Common myeloid progenitor, CD34-positive (primary cell): ENCODE measurements at regions of chr15 and their contacts with region 1.

Region 1: DNA sequence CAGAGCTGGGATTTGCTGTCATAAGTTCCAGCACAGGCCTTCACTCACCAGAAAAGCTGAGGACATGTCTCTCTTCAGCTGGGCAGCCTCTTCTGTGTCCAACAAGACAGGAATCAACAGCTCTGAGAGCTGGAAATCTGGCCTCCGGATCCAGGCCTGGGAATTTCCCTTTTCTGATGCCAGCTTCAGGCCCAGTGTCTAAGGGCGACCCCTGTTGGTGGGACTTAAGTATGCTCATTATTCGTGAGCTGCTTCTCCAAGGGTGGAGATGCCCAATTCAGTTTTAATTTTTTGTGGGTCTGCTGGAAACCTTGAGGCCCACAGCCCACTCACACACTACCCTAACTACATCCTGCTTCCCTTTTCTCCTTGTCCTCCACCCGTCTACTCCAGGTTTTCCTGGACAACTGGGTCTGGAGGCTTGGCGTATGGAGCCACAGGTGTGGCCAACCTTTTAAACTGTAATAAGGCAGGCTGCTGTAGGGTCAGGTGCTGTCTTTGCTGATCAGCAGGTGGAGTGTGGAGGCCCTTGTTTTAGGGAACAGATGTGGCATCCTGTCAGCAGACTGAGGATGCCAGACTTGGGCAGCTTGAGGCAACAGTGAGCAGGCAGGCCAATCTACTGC is 2.6 kb upstream of the CEMIP start:
- DNase-seq: peak; percentile 75 to 88 (median 81)
- H3K4me3 ChIP-seq: no peak overlapping the region
- H3K27ac ChIP-seq: no peak overlapping the region
- H3K4me1 ChIP-seq: peaks cover 3 to 49% (median 36%) of the 10 kb centered on the region in 4 experiments
- H3K27me3 ChIP-seq: peaks cover 0 to 38% (median 23%) of the 10 kb centered on the region in 5 experiments

Region 2: DNA sequence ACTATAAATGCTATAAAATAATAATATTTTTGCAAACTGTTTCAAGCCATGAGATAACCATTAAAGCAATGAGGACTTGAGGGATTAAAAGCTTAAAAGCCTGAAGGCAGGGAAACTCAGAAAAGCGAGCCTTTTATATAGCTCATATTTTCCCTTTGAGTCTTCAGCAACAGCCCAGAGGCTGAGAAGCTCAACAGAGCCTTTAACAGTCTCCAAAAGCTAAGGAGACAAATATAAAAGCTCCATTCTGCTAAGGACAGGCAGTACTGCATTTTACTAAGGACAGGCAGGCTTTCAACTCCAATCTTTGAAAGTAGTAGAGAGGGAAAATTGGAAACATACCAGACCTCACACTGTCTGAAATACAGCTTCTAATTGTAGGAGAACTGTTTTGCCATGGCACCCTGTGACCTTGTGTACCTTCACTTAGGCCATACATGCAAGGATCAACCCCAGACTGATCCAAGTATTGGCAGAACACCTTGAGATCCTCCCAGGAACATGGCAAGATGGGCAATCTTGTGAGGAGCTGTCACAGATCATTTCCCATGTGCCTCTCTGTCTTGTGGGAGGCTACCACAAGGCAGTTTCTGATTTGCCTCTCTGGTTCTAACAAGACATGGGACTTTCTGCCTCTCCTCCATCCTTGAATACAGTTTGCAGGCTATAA is 425.5 kb before region 1 on chr15:
- CTCF ChIA-PET with region 1: no interaction called
- POLR2A ChIA-PET with region 1: no interaction called
- DNase-seq: no peak
- H3K4me3 ChIP-seq: no peak overlapping the region
- H3K27ac ChIP-seq: no peak overlapping the region
- H3K4me1 ChIP-seq: peaks cover 0 to under 1% (median 0%) of the 10 kb centered on the region in 4 experiments
- H3K27me3 ChIP-seq: peaks cover 0 to 3% (median 2%) of the 10 kb centered on the region in 5 experiments

Region 3: DNA sequence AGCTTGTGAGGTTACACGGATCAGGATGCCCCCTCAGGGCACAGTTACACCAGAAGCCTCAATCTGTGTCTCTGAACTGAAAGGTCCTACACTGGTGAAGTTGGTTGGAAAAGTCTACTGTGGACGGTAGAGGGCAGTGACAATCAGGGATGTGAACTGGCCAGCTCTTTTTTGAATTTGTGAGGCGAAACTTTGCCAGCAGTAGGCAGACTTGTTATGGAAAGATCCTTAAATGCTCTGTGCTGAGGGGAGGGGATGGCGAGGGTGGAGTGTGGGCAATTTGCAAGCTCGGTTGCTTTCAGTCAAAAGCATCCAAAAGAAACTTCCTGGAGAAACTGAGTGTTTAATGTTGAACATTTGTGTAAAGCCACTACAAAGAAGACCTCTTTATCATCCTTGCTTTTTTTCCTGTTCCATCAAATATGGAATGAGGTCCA is 208.8 kb before region 1 on chr15:
- CTCF ChIA-PET with region 1: interaction called, 57 read pairs
- POLR2A ChIA-PET with region 1: interaction called, 4 read pairs
- DNase-seq: peak; percentile 78 to 85 (median 80)
- H3K4me3 ChIP-seq: no peak overlapping the region
- H3K27ac ChIP-seq: no peak overlapping the region
- H3K4me1 ChIP-seq: peaks cover 0 to 7% (median 6%) of the 10 kb centered on the region in 4 experiments
- H3K27me3 ChIP-seq: peaks cover 0 to 2% (median 0%) of the 10 kb centered on the region in 5 experiments

Region 4: DNA sequence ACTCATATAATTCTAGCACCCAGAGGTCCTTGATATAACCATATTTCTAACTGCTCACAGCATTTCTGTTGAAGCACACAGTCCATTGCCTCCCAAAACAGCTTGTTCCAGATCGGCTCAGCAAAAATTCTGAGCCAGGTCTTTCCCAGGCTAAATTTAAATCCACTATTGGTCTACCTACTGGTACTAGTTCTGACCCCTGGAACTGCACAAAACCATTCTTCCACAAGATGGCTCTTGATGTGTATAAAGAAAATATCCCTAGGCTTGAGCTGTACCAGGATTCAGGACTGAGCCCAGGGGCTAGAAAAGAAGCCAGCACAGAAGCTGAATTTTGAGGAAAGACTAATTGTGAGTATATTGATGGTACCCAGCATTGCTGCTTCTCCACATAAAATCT is 156.9 kb before region 1 on chr15:
- CTCF ChIA-PET with region 1: interaction called, 29 read pairs
- POLR2A ChIA-PET with region 1: no interaction called
- DNase-seq: peak; percentile 31 to 61 (median 44)
- H3K4me3 ChIP-seq: no peak overlapping the region
- H3K27ac ChIP-seq: no peak overlapping the region
- H3K4me1 ChIP-seq: no peaks in the 10 kb centered on the region
- H3K27me3 ChIP-seq: peaks cover 0 to 17% (median 4%) of the 10 kb centered on the region in 5 experiments

Region 5: GRCh38 chr15:80669663-80670273 is 106.8 kb before region 1 on chr15:
- CTCF ChIA-PET with region 1: interaction called, 12 read pairs
- POLR2A ChIA-PET with region 1: no interaction called
- DNase-seq: peak in 2 of 3 donors; percentile 5 to 11
- H3K4me3 ChIP-seq: no peak overlapping the region
- H3K27ac ChIP-seq: no peak overlapping the region
- H3K4me1 ChIP-seq: peaks cover 0 to 11% (median 9%) of the 10 kb centered on the region in 4 experiments
- H3K27me3 ChIP-seq: no peaks in the 10 kb centered on the region

Region 6: DNA sequence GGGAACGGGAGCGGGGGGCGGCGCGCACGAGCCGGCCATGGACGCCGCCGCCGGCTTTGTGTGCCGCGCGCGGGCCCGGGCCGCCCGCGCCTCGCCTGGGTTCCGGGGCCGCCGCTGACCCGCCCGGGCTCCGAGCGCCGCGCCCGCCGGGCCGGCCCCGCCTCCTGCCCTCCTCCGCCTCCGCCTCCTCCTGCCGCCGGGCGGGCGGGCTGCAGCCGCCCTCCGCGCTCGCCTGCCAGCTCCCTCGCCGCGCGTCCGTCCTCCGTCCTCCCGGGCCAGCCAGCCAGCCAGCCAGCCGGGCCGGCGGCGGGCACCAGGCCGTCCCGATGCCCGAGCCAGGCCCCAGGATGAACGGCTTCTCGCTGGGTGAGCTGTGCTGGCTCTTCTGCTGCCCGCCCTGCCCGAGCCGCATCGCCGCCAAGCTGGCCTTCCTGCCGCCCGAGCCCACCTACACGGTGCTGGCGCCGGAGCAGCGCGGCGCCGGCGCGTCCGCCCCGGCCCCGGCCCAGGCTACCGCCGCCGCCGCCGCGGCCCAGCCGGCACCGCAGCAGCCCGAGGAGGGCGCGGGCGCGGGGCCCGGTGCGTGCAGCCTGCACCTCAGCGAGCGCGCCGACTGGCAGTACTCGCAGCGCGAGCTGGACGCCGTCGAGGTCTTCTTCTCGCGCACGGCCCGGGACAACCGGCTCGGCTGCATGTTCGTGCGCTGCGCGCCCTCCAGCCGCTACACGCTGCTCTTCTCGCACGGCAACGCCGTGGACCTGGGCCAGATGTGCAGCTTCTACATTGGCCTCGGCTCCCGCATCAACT is 81.2 kb before region 1 on chr15 and contains the start of gene ABHD17C:
- CTCF ChIA-PET with region 1: interaction called, 12 read pairs
- POLR2A ChIA-PET with region 1: no interaction called
- DNase-seq: peak; percentile 34 to 74 (median 66)
- H3K4me3 ChIP-seq: peak within 1 kb of the TSS; percentile 59 to 83 (median 69)
- H3K27ac ChIP-seq: no peak within 1 kb of the TSS
- H3K4me1 ChIP-seq: peaks cover 0 to 26% (median 17%) of the 10 kb centered on the region in 4 experiments
- H3K27me3 ChIP-seq: peaks cover 0 to 5% (median 0%) of the 10 kb centered on the region in 5 experiments

Region 7: GRCh38 chr15:80970018-80970658 is 193.6 kb after region 1 on chr15:
- CTCF ChIA-PET with region 1: interaction called, 17 read pairs
- POLR2A ChIA-PET with region 1: no interaction called
- DNase-seq: peak; percentile 51 to 80 (median 71)
- H3K4me3 ChIP-seq: no peak overlapping the region
- H3K27ac ChIP-seq: no peak overlapping the region
- H3K4me1 ChIP-seq: no peaks in the 10 kb centered on the region
- H3K27me3 ChIP-seq: no peaks in the 10 kb centered on the region